ENCODE measurements at regions of chr21 and their contacts with region 1.

Region 1: GRCh38 chr21:45923146-45923545 is 58.4 kb upstream of the COL6A1 start:
- DNase-seq: peak; percentile 82
- ATAC-seq: peak; percentile 85
- H3K4me3 Mint-ChIP-seq: no peak overlapping the region
- H3K27ac Mint-ChIP-seq: no peak overlapping the region
- H3K4me1 Mint-ChIP-seq: peaks cover 12% of the 10 kb centered on the region
- H3K27me3 Mint-ChIP-seq: no peaks in the 10 kb centered on the region

Region 2: DNA sequence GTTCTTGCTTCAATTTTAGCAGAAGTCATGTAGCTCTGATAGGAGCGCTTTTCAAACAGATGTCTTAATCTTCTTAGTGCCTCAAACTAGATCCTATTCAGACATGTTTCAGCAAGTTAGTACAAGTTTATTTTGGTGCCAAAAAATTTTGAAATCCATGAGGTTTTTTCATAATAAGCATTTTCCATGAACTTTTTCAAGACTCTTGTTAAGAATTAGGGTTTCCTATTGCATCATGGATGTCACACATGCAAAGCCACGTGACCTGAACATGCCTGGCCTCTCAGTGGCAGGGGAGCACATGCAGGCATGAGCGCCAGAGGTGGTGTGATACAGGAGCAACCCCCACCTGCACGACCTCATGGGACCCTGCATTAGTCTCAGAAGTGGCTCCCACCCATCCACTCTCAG is 703.1 kb before region 1 on chr21:
- CTCF ChIA-PET with region 1: no interaction called
- POLR2A ChIA-PET with region 1: no interaction called
- intact Hi-C with region 1: no loop called
- DNase-seq: no peak
- ATAC-seq: no peak
- H3K4me3 Mint-ChIP-seq: no peak overlapping the region
- H3K27ac Mint-ChIP-seq: no peak overlapping the region
- H3K4me1 Mint-ChIP-seq: peaks cover 15% of the 10 kb centered on the region
- H3K27me3 Mint-ChIP-seq: no peaks in the 10 kb centered on the region

Region 3: DNA sequence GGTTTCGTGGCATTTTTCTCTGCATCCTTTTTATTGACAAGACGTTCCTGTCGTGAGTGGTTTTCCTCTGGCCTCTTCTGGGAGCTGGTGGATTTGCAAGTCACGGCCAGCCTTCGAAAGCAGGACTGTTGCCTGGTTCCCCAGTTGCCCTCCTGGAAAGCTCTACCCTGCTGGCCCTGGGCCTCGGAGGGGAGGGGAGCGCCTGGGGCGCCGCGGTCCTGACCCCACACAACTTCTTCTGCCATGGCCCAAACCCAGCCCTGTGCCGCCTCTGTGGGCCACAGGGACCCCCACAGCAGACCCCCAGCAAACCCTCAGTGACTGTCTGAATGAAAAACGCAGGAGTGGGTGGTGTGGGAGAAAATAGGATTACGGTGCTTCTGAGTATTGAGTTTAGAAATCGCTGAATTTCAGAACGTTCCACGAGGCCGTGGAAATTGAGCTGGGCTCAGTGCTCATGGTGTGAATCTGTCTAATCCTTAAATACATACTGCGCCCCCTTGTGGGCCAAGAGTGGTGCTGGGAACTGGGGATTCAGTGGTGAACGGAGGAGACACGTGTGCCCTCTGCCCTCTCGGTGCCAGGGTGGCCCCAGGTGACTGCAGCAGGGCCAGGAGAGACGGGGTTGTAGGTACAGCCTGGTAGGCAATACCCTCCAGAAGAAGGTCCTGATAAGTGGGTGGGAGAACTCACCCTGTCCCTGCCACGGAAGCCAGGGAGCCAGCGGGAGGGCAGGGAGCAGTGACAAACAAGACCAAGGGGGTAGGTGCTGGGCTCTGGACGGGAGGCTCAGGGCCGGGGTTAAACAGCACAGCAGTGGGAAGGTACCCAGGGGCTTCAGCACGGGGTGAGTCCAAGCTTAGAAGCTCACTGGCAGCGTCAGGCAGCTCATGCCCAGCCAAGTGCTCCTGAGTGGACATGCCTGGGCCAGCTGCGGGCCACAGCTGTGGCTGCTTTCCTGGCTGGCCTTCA is 42.8 kb before region 1 on chr21:
- CTCF ChIA-PET with region 1: interaction called, 8 read pairs
- POLR2A ChIA-PET with region 1: no interaction called
- intact Hi-C with region 1: loop called (anchors 2 to 5 kb)
- DNase-seq: peak; percentile 90
- ATAC-seq: peak; percentile 96
- H3K4me3 Mint-ChIP-seq: no peak overlapping the region
- H3K27ac Mint-ChIP-seq: peak overlapping the region; percentile 73
- H3K4me1 Mint-ChIP-seq: peaks cover 55% of the 10 kb centered on the region
- H3K27me3 Mint-ChIP-seq: no peaks in the 10 kb centered on the region

Region 4: DNA sequence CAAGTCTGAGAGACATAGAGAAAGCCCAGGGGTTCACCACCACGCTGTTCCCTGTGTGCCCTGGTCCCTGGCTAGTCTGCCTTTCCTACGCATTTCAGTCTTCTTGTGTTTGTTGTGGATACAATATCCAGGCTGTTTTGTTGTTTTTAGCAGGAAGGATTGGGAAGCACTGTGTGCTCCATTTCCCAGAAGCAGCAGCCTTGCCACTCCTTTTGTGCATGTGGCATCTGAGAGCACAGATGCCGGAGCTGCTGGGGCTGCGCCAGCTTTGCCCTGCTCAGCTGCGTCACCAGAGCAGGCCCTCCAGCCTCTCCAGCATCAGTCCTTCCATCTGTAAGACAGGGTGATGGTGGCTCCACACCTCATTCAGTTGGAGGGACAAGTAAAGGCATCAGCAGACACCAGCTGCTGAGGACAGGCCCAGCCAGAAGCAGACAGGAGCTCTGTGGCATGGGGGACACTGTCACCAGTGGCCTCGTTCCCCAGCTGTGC is 36.0 kb before region 1 on chr21:
- CTCF ChIA-PET with region 1: interaction called, 8 read pairs
- POLR2A ChIA-PET with region 1: no interaction called
- intact Hi-C with region 1: loop called in 1 of 2 experiments (anchors 5 kb)
- DNase-seq: no peak
- ATAC-seq: no peak
- H3K4me3 Mint-ChIP-seq: peak overlapping the region; percentile 21
- H3K27ac Mint-ChIP-seq: peak overlapping the region; percentile 68
- H3K4me1 Mint-ChIP-seq: peaks cover 86% of the 10 kb centered on the region
- H3K27me3 Mint-ChIP-seq: peaks cover 2% of the 10 kb centered on the region

Measured in activated CD4-positive, alpha-beta T cell treated with anti-CD3 and anti-CD28 coated beads for 36 hours (primary cell).